Spleen (tissue), 13 donors: ENCODE measurements at regions of chr3 and their contacts with region 1.

Region 1: DNA sequence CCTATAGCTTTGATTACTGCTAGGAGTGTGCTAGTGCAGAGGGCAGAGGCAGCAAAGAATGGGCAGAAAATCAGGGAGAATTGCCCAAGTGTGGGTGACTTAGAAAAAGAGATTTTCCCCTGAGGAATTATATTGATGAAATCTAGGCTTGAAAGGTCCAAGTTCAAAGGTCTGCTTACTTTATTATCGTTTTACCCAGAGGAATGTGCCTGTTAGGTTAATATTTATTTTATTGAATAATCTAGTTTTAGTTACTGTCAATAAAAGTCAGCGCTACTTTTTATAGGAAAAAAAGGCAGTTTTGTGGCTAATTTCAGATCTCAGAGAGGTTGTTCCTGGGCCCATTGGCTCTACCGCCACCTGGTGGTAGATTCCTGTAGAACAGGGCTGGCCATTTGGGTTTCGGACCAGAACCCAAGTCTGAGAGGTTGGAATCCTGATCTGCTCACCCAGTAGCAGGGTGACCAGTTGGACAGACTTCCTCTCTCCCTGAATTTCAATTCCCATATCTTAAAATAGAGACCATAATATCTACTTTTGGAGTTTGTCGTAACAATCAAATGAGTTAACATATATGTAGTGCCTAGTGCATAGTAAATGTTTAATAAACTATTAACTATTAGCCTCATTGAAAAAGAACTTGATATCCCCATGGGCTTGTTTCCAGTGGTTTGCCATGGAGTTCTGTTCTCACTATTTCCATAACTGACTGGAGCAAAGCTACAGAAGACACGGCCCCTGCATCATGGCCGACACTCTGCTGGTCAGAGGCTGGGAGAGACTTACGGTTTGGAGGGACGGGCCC is 62.7 kb upstream of the ZNF148 start:
- DNase-seq: peak; percentile 79
- H3K4me3 ChIP-seq: no peak overlapping the region
- H3K27ac ChIP-seq: no peak overlapping the region
- H3K4me1 ChIP-seq: no peaks in the 10 kb centered on the region
- H3K27me3 ChIP-seq: no peaks in the 10 kb centered on the region
- CTCF ChIP-seq: peak; percentile 56 to 95 (median 90)
- POLR2A ChIP-seq: no peak

Region 2: GRCh38 chr3:124928333-124929202 is 509.3 kb before region 1 on chr3:
- intact Hi-C with region 1: loop called (anchors 5 kb)
- DNase-seq: no peak
- H3K4me3 ChIP-seq: no peak overlapping the region
- H3K27ac ChIP-seq: no peak overlapping the region
- H3K4me1 ChIP-seq: peaks cover 0 to 4% (median 0%) of the 10 kb centered on the region in 6 donors
- H3K27me3 ChIP-seq: no peaks in the 10 kb centered on the region
- CTCF ChIP-seq: peak; percentile 46 to 77 (median 68)
- POLR2A ChIP-seq: no peak

Region 3: GRCh38 chr3:124995460-124995994 is 442.3 kb before region 1 on chr3:
- intact Hi-C with region 1: loop called (anchors 5 kb)
- DNase-seq: no peak
- H3K4me3 ChIP-seq: no peak overlapping the region
- H3K27ac ChIP-seq: peak overlapping the region in 6 of 8 donors; percentile 55 to 78 (median 64)
- H3K4me1 ChIP-seq: peaks cover 3 to 38% (median 27%) of the 10 kb centered on the region in 6 donors
- H3K27me3 ChIP-seq: no peaks in the 10 kb centered on the region
- CTCF ChIP-seq: peak; percentile 24 to 77 (median 66)
- POLR2A ChIP-seq: no peak